Ascending aorta (tissue), 2 donors: ENCODE measurements at regions of chr14 and their contacts with region 1.

Region 1: GRCh38 chr14:73472185-73473114 is 14.1 kb upstream of the NUMB start:
- DNase-seq: peak in 1 of 2 donors; percentile 16
- H3K4me3 ChIP-seq: no peak overlapping the region
- H3K27ac ChIP-seq: no peak overlapping the region
- H3K4me1 ChIP-seq: no peaks in the 10 kb centered on the region
- H3K27me3 ChIP-seq: no peaks in the 10 kb centered on the region
- CTCF ChIP-seq: peak; percentile 70 to 73 (median 70)

Region 2: DNA sequence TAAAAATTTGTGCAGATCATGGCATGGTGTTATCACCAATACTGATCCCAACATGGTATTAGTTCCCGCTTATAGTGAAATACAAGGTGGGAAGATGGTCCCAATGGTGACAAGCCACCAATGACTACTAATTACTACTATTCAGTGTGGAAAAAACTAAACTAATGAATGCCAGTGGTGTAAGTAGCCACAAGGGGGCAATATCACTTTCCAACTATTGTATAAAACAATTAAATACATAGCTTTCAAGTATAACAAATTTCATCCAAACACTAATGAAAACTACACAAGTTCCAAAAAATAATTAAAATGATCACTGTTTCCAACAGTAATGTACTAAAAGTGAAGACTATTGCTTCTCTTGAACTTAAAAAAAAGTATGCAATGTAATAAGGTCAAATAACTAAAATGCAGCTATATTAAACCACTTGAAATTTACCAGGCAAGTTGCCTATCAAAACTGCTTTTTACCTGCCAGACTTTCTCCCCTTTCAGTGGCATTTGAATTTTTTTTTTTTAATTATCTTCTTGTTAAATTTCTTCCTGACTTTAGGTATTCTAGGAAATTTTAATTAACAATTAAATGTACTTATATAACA is 177.2 kb before region 1 on chr14:
- intact Hi-C with region 1: loop called (anchors 1 kb)
- DNase-seq: no peak
- H3K4me3 ChIP-seq: no peak overlapping the region
- H3K27ac ChIP-seq: no peak overlapping the region
- H3K4me1 ChIP-seq: no peaks in the 10 kb centered on the region
- H3K27me3 ChIP-seq: no peaks in the 10 kb centered on the region
- CTCF ChIP-seq: peak; percentile 41 to 62 (median 51)

Region 3: GRCh38 chr14:73311708-73312030 is 160.8 kb before region 1 on chr14:
- intact Hi-C with region 1: no loop called
- DNase-seq: no peak
- H3K4me3 ChIP-seq: no peak overlapping the region
- H3K27ac ChIP-seq: no peak overlapping the region
- H3K4me1 ChIP-seq: no peaks in the 10 kb centered on the region
- H3K27me3 ChIP-seq: no peaks in the 10 kb centered on the region
- CTCF ChIP-seq: no peak

Region 4: DNA sequence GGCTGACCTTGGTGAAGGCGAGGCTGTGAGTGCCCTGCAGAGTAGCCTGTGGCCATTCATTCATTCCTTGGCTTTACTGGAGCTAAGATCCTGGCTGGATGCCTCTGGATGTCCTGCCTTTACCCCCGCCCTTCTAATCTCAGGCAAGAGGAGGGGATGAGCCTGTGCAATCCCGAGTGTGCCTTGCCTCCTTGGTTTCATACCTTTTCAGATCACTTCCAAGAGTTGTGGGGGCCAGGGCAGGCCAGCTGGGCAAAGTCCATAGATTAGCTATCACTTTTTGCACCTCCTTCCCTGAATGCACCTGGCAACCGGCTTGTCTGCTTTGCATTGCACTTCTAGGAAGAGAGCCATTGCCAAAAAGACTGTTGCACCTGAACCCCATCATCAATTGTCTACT is 877.3 kb after region 1 on chr14:
- intact Hi-C with region 1: no loop called
- DNase-seq: no peak
- H3K4me3 ChIP-seq: no peak overlapping the region
- H3K27ac ChIP-seq: no peak overlapping the region
- H3K4me1 ChIP-seq: no peaks in the 10 kb centered on the region
- H3K27me3 ChIP-seq: no peaks in the 10 kb centered on the region
- CTCF ChIP-seq: no peak